H1 (cell line): ENCODE measurements at regions of chr19 and their contacts with region 1.

Region 1: GRCh38 chr19:1470203-1471009 is 8.6 kb downstream of the C19orf25 start:
- DNase-seq: peak in 1 of 2 experiments; percentile 86
- H3K4me3 ChIP-seq: peak overlapping the region; percentile 29 to 56 (median 36)
- H3K27ac ChIP-seq: no peak overlapping the region
- H3K4me1 ChIP-seq: peaks cover 0 to 46% (median 24%) of the 10 kb centered on the region in 4 experiments; a peak in 5 of 7 replicates
- H3K27me3 ChIP-seq: peaks cover 60 to 80% (median 77%) of the 10 kb centered on the region in 4 experiments
- CTCF ChIP-seq: no peak
- EP300 ChIP-seq: no peak
- POLR2A ChIP-seq: no peak; a peak in 1 of 3 replicates
- RAD21 ChIP-seq: no peak

Region 2: GRCh38 chr19:1438035-1438932 is 32.1 kb before region 1 on chr19 and contains the start of gene RPS15:
- CTCF ChIA-PET with region 1: interaction called, 26 read pairs
- POLR2A ChIA-PET with region 1: interaction called, 72 read pairs
- DNase-seq: peak; percentile 90 to 97
- H3K4me3 ChIP-seq: peak within 1 kb of the TSS; percentile 72 to 97 (median 90)
- H3K27ac ChIP-seq: peak within 1 kb of the TSS; percentile 96
- H3K4me1 ChIP-seq: peaks cover 0 to 5% (median 4%) of the 10 kb centered on the region in 4 experiments; a peak in 4 of 7 replicates
- H3K27me3 ChIP-seq: no peaks in the 10 kb centered on the region
- CTCF ChIP-seq: peak; percentile 91 to 97 (median 92)
- EP300 ChIP-seq: no peak
- POLR2A ChIP-seq: peak; percentile 97 to 98
- RAD21 ChIP-seq: peak; percentile 33 to 52; a peak in 3 of 4 replicates
- total RNA-seq, gene RPS15: 1,562 and 1,589 TPM in 2 replicates

Region 3: GRCh38 chr19:1445185-1445931 is 25.0 kb before region 1 on chr19:
- CTCF ChIA-PET with region 1: interaction called, 26 read pairs
- POLR2A ChIA-PET with region 1: interaction called, 72 read pairs
- DNase-seq: peak in 1 of 2 experiments; percentile 95
- H3K4me3 ChIP-seq: peak overlapping the region; percentile 49 to 74 (median 66)
- H3K27ac ChIP-seq: no peak overlapping the region
- H3K4me1 ChIP-seq: peaks cover 0 to 18% (median 7%) of the 10 kb centered on the region in 4 experiments; a peak in 5 of 7 replicates
- H3K27me3 ChIP-seq: peaks cover 26 to 41% (median 38%) of the 10 kb centered on the region in 4 experiments
- CTCF ChIP-seq: peak; percentile 78 to 94 (median 87)
- EP300 ChIP-seq: no peak
- POLR2A ChIP-seq: no peak
- RAD21 ChIP-seq: peak; percentile 36 to 55; a peak in 3 of 4 replicates

Region 4: DNA sequence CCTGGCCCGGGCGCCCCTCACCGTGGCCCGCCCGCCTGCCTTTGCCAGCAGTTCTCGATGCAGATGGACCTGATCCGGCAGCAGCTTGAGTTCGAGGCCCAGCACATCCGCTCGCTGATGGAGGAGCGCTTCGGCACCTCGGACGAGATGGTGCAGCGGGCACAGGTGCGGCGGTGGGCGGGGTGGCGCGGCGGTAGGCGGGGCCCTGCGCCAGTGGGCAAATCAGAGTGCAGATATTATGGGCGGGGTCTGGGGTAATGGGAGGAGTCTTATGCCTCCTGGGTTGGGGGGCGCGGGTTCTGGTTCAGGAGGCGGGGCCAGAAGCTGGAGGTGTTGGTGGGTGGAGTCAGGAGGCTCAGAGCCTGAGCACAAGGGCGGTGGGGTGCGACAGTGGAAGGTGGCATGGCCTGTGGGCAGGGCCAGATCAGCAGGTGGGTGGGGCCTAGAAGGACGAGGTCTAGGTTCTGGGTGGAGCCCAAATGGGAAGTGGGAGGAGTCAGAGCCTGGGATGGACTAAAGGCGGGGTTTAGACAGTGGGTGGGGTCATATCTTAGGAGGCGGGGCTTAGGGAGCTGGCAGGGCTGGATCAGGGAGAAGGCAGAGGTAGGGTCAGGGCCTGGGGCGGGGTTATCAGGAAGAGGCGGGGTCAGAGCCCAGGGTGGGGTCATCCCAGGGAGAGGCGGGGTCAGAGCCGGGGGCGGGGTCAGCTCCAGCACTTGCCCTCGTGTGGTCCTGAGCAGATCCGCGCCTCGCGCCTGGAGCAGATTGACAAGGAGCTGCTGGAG is 14.9 kb before region 1 on chr19:
- CTCF ChIA-PET with region 1: interaction called, 53 read pairs
- POLR2A ChIA-PET with region 1: interaction called, 55 read pairs
- DNase-seq: peak; percentile 90 to 97
- H3K4me3 ChIP-seq: peak overlapping the region in 2 of 4 experiments; percentile 1 to 54; a peak in 3 of 8 replicates
- H3K27ac ChIP-seq: no peak overlapping the region
- H3K4me1 ChIP-seq: peaks cover 0 to 32% (median 27%) of the 10 kb centered on the region in 4 experiments; a peak in 6 of 7 replicates
- H3K27me3 ChIP-seq: peaks cover 6 to 25% (median 20%) of the 10 kb centered on the region in 4 experiments
- CTCF ChIP-seq: no peak
- EP300 ChIP-seq: no peak
- POLR2A ChIP-seq: no peak
- RAD21 ChIP-seq: no peak